Activated B cell treated with CpG ODN at 0.5 μM for 24 hours (primary cell): ENCODE measurements at regions of chr1 and their contacts with region 1.

Region 1: GRCh38 chr1:158285756-158286241 is 3.9 kb upstream of the CD1C start:
- DNase-seq: peak; percentile 68
- ATAC-seq: peak; percentile 73
- H3K4me3 Mint-ChIP-seq: peak overlapping the region; percentile 88
- H3K27ac Mint-ChIP-seq: peak overlapping the region; percentile 99
- H3K4me1 Mint-ChIP-seq: peaks cover 72% of the 10 kb centered on the region
- H3K27me3 Mint-ChIP-seq: no peaks in the 10 kb centered on the region
- CTCF ChIP-seq: no peak

Region 2: GRCh38 chr1:158163000-158163947 is 122.5 kb before region 1 on chr1:
- CTCF ChIA-PET with region 1: no interaction called
- POLR2A ChIA-PET with region 1: interaction called, 6 read pairs
- intact Hi-C with region 1: loop called (anchors 1 kb)
- DNase-seq: no peak
- ATAC-seq: peak; percentile 93
- H3K4me3 Mint-ChIP-seq: peak overlapping the region; percentile 68
- H3K27ac Mint-ChIP-seq: peak overlapping the region; percentile 74
- H3K4me1 Mint-ChIP-seq: peaks cover 57% of the 10 kb centered on the region
- H3K27me3 Mint-ChIP-seq: no peaks in the 10 kb centered on the region
- CTCF ChIP-seq: no peak

Region 3: DNA sequence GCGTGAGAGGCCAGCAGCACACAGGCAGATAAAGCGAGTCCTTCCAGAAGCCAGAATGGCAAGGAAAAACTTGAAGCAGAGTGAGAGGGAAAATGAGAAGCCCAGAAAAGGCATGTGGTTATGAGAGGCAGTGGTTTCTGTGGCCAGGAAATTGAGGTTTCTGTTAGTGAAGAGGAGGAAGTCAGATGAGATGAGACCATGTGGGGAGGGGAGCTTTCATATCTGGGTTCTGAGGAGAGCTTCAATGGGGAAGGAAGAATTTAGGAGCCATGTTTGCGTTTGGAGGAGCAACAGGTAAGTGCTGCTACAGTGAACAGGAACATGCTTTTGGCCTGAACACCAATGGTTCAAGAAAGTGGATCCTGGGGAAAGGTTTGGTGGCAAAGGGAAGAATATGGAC is 37.7 kb before region 1 on chr1:
- CTCF ChIA-PET with region 1: interaction called, 5 read pairs
- POLR2A ChIA-PET with region 1: interaction called, 47 read pairs
- intact Hi-C with region 1: loop called (anchors 1 kb)
- DNase-seq: peak; percentile 32
- ATAC-seq: peak; percentile 83
- H3K4me3 Mint-ChIP-seq: peak overlapping the region; percentile 26
- H3K27ac Mint-ChIP-seq: peak overlapping the region; percentile 59
- H3K4me1 Mint-ChIP-seq: peaks cover 51% of the 10 kb centered on the region
- H3K27me3 Mint-ChIP-seq: no peaks in the 10 kb centered on the region
- CTCF ChIP-seq: no peak

Region 4: DNA sequence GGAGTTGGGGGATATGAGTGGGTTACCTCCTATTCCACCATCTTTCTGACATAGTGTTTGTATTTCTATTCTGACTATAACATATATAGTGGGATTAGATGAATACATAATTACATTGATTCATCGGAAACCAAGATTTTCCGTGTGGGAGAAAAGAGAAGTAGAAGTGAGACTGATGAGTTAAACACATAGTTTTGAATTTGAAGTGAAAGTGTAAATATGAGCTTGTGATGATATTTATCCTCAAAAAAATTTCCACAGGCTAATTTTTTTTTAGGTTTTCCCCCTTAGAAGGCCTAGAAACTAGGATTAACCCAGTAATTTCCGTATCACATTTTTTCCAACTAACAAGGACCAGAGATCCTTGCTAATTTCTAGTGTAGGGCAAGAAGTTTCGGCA is 38.6 kb after region 1 on chr1:
- CTCF ChIA-PET with region 1: interaction called, 19 read pairs
- POLR2A ChIA-PET with region 1: interaction called, 12 read pairs
- intact Hi-C with region 1: loop called (anchors 2 kb)
- DNase-seq: no peak
- ATAC-seq: no peak
- H3K4me3 Mint-ChIP-seq: peak overlapping the region; percentile 41
- H3K27ac Mint-ChIP-seq: peak overlapping the region; percentile 59
- H3K4me1 Mint-ChIP-seq: peaks cover 26% of the 10 kb centered on the region
- H3K27me3 Mint-ChIP-seq: no peaks in the 10 kb centered on the region
- CTCF ChIP-seq: no peak

Region 5: GRCh38 chr1:158398818-158399514 is 113.2 kb after region 1 on chr1 and contains the start of gene OR10T2:
- CTCF ChIA-PET with region 1: no interaction called
- POLR2A ChIA-PET with region 1: interaction called, 3 read pairs
- intact Hi-C with region 1: loop called (anchors 2 kb)
- DNase-seq: no peak
- ATAC-seq: no peak
- H3K4me3 Mint-ChIP-seq: no peak within 1 kb of the TSS
- H3K27ac Mint-ChIP-seq: no peak within 1 kb of the TSS
- H3K4me1 Mint-ChIP-seq: peaks cover 12% of the 10 kb centered on the region
- H3K27me3 Mint-ChIP-seq: no peaks in the 10 kb centered on the region
- CTCF ChIP-seq: no peak
- total RNA-seq, gene OR10T2: not detected in 2 replicates

Region 6: GRCh38 chr1:159077120-159077961 is 791.5 kb after region 1 on chr1:
- CTCF ChIA-PET with region 1: no interaction called
- POLR2A ChIA-PET with region 1: interaction called, 16 read pairs
- intact Hi-C with region 1: no loop called
- DNase-seq: peak; percentile 71
- ATAC-seq: peak; percentile 73
- H3K4me3 Mint-ChIP-seq: peak overlapping the region; percentile 89
- H3K27ac Mint-ChIP-seq: peak overlapping the region; percentile 94
- H3K4me1 Mint-ChIP-seq: peaks cover 40% of the 10 kb centered on the region
- H3K27me3 Mint-ChIP-seq: no peaks in the 10 kb centered on the region
- CTCF ChIP-seq: no peak